ENCODE measurements at regions of chr11 and their contacts with region 1.

Region 1: DNA sequence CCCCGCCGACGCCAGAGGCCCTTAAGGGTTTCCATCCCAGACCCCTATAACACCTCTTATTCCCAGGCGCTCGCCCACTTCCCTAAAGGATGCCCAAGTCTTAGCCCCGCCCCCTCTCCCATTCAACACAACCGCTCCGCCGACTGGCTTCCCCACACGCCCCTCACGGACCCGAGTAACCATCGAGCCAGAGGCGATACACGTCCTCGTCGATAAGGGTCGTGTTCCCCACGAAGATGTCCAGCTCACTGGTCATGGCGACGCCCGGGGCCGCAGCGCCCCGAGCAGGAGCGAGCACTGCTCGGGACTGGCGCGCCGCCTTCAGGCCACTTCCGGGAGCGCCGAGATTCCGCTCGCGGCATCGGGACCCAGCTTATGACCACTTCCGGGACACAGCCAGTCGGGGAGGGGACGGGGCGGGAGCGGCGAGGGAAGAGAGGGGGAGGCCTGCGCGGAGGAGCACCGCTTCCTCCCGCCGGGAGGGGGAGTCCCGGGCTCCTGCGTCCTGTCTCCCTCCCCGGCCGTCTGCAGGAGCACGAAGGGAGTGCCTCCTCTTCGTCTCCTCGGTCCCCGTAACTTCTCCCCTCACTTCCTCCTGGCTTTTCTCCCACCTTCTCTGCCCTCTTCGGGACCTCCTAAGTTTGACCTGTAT is at the start of gene FIBP:
- DNase-seq: peak; percentile 98
- ATAC-seq: peak; percentile 64
- H3K4me3 Mint-ChIP-seq: peak within 1 kb of the TSS; percentile 97
- H3K27ac Mint-ChIP-seq: peak within 1 kb of the TSS; percentile 98
- H3K4me1 Mint-ChIP-seq: peaks cover 44% of the 10 kb centered on the region
- H3K27me3 Mint-ChIP-seq: peaks cover 15% of the 10 kb centered on the region
- CTCF ChIP-seq: peak; percentile 57
- total RNA-seq, gene FIBP: 91.6 to 93.1 TPM (median 92.2 TPM) in 3 replicates

Region 2: DNA sequence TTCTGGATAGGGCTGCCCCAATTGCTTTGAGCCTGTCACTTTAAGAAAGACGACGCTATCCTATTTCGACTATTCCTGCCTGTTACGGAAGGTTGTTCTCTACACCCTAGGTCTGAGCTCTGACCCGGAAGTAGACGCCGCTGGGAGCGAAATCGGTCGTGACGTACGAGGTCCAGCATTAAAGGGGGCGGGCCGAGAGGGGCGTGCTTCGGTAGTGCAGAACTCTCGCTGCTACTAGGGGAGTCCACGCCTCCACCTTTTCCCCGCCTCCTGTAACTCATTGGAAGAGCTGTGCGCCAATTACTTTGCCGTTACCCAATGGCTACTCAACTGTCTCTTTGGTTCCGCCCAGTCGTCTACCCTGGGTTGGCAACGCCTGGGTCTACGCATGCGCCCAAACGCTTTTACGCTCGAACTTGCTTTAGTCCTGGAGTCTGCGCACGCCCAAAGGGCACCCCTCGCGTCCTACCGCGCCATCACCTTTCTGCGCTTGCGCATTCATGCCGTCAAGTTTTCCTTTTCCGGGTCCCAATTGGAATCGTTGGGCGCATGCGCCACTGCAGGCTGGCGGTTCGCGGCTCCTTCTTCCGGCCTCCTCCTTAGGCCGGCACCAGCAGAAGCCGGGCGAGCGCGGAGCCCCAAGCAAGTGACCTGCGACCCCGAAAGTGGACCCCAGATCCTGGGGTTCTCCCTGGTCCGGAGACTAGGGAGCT is 272.9 kb before region 1 on chr11 and contains the start of gene PCNX3:
- CTCF ChIA-PET with region 1: interaction called, 12 read pairs
- POLR2A ChIA-PET with region 1: no interaction called
- DNase-seq: peak; percentile 100
- ATAC-seq: peak; percentile 91
- H3K4me3 Mint-ChIP-seq: peak within 1 kb of the TSS; percentile 94
- H3K27ac Mint-ChIP-seq: peak within 1 kb of the TSS; percentile 98
- H3K4me1 Mint-ChIP-seq: peaks cover 21% of the 10 kb centered on the region
- H3K27me3 Mint-ChIP-seq: no peaks in the 10 kb centered on the region; the same call in 1 of the 2 replicates
- CTCF ChIP-seq: no peak
- total RNA-seq, gene PCNX3: 44.6 to 51.6 TPM (median 45.8 TPM) in 3 replicates

Region 3: GRCh38 chr11:65720237-65720934 is 167.9 kb before region 1 on chr11 and contains the start of gene RNASEH2C:
- CTCF ChIA-PET with region 1: interaction called, 18 read pairs
- POLR2A ChIA-PET with region 1: no interaction called
- DNase-seq: peak; percentile 82
- ATAC-seq: peak; percentile 87
- H3K4me3 Mint-ChIP-seq: peak within 1 kb of the TSS; percentile 98
- H3K27ac Mint-ChIP-seq: peak within 1 kb of the TSS; percentile 63; the same call in 1 of the 2 replicates
- H3K4me1 Mint-ChIP-seq: peaks cover 9% of the 10 kb centered on the region
- H3K27me3 Mint-ChIP-seq: peaks cover 4% of the 10 kb centered on the region; the same call in 1 of the 2 replicates
- CTCF ChIP-seq: no peak
- total RNA-seq, gene RNASEH2C: 42.1 to 53.0 TPM (median 52.2 TPM) in 3 replicates

Region 4: GRCh38 chr11:65833297-65834030 is 54.8 kb before region 1 on chr11 and contains the start of gene SNX32:
- CTCF ChIA-PET with region 1: interaction called, 18 read pairs
- POLR2A ChIA-PET with region 1: no interaction called
- DNase-seq: peak; percentile 97
- ATAC-seq: peak; percentile 97
- H3K4me3 Mint-ChIP-seq: no peak within 1 kb of the TSS
- H3K27ac Mint-ChIP-seq: no peak within 1 kb of the TSS
- H3K4me1 Mint-ChIP-seq: peaks cover 10% of the 10 kb centered on the region
- H3K27me3 Mint-ChIP-seq: peaks cover 19% of the 10 kb centered on the region
- CTCF ChIP-seq: no peak
- total RNA-seq, gene SNX32: 2.2 to 3.4 TPM (median 2.9 TPM) in 3 replicates

Region 5: GRCh38 chr11:65900125-65900898 is 12.0 kb after region 1 on chr11 and contains the start of gene FOSL1:
- CTCF ChIA-PET with region 1: interaction called, 47 read pairs
- POLR2A ChIA-PET with region 1: interaction called, 7 read pairs
- DNase-seq: peak; percentile 97
- ATAC-seq: peak; percentile 95
- H3K4me3 Mint-ChIP-seq: peak within 1 kb of the TSS; percentile 72
- H3K27ac Mint-ChIP-seq: 0 out of 2 replicates have a peak within 1 kb of the TSS, but pooled peaks have one; percentile 41
- H3K4me1 Mint-ChIP-seq: 0 out of 2 replicates have a peak, but pooled peaks cover 4% of the 10 kb centered on the region
- H3K27me3 Mint-ChIP-seq: peaks cover 78% of the 10 kb centered on the region
- CTCF ChIP-seq: no peak
- total RNA-seq, gene FOSL1: 16.3 to 20.5 TPM (median 17.1 TPM) in 3 replicates

Region 6: DNA sequence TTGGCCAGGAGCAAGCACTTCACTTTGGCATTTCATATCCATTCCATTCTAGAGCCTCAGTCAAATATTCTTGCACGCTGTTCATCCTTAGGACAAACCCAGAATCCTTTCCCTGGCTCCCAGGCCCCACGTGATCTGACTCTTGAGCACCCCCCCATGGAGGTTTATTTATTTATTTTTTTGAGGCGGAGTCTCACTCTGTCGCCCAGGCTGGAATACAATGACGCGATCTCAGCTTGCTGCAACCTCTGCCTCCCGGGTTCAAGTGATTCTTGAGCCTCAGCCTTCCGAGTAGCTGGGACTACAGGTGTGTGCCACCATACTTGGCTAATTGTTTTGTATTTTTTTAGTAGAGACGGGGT is 44.2 kb after region 1 on chr11:
- CTCF ChIA-PET with region 1: interaction called, 21 read pairs
- POLR2A ChIA-PET with region 1: interaction called, 5 read pairs
- DNase-seq: peak; percentile 37
- ATAC-seq: peak; percentile 75
- H3K4me3 Mint-ChIP-seq: peak overlapping the region; percentile 22; the same call in 1 of the 2 replicates
- H3K27ac Mint-ChIP-seq: no peak overlapping the region; the same call in 1 of the 2 replicates
- H3K4me1 Mint-ChIP-seq: peaks cover 21% of the 10 kb centered on the region
- H3K27me3 Mint-ChIP-seq: no peaks in the 10 kb centered on the region
- CTCF ChIP-seq: no peak

Region 7: GRCh38 chr11:66022401-66023185 is 134.3 kb after region 1 on chr11:
- CTCF ChIA-PET with region 1: interaction called, 18 read pairs
- POLR2A ChIA-PET with region 1: no interaction called
- DNase-seq: peak; percentile 92
- ATAC-seq: peak; percentile 96
- H3K4me3 Mint-ChIP-seq: peak overlapping the region; percentile 50
- H3K27ac Mint-ChIP-seq: no peak overlapping the region; the same call in 1 of the 2 replicates
- H3K4me1 Mint-ChIP-seq: no peaks in the 10 kb centered on the region
- H3K27me3 Mint-ChIP-seq: peaks cover 29% of the 10 kb centered on the region
- CTCF ChIP-seq: peak; percentile 95

Region 8: DNA sequence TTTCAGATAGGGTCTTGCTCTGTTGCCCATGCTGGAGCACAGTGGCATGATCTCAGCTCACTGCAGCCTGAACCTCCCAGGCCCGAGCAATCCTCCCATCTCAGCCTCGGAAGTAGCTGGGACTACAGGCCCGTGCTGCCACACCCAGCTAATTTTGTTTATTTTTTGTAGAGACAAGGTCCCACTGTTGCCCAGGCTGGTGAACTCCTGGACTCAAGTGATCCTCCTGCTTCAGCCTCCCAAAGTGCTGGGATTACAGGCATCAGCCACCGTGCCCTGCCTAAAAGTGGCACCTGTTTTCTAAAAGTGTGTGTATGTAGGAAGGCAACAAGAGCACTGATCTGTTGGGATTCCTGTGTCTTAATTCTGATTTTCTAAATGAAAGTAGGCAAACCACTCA is 202.0 kb after region 1 on chr11:
- CTCF ChIA-PET with region 1: no interaction called
- POLR2A ChIA-PET with region 1: no interaction called
- DNase-seq: no peak
- ATAC-seq: no peak
- H3K4me3 Mint-ChIP-seq: no peak overlapping the region
- H3K27ac Mint-ChIP-seq: no peak overlapping the region
- H3K4me1 Mint-ChIP-seq: no peaks in the 10 kb centered on the region
- H3K27me3 Mint-ChIP-seq: no peaks in the 10 kb centered on the region
- CTCF ChIP-seq: no peak

Region 9: DNA sequence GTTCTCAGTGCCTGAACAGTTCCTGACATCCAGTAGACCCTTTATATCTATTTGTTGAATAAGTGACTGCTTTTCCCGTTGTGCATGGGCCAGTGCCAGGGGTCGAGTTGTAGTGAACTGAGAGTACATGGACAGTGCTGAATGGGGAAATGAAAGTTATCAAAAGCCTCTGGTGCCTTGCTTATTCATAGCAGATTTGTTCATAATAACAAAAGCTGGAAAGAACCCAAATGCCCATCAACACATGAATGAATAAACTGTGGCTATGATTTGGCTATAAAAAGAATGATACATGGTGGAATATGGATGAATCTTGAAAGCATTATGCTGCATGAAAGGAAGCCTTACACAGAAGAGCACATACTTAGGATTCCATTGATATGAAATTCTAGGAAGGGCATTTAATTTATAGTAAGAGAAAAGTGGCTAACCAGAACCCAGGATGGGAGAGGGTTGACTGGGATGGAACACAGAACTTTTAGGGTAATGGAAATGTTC is 224.4 kb after region 1 on chr11:
- CTCF ChIA-PET with region 1: no interaction called
- POLR2A ChIA-PET with region 1: no interaction called
- DNase-seq: no peak
- ATAC-seq: no peak
- H3K4me3 Mint-ChIP-seq: no peak overlapping the region
- H3K27ac Mint-ChIP-seq: 0 out of 2 replicates have a peak overlapping the region, but pooled peaks have one; percentile 20
- H3K4me1 Mint-ChIP-seq: peaks cover 40% of the 10 kb centered on the region
- H3K27me3 Mint-ChIP-seq: no peaks in the 10 kb centered on the region
- CTCF ChIP-seq: no peak